Endothelial cell of umbilical vein (primary cell): ENCODE measurements at regions of chr5 and their contacts with region 1.

Region 1: GRCh38 chr5:123610665-123611405 is 98.9 kb downstream of the CSNK1G3 start:
- DNase-seq: peak; percentile 84
- H3K4me3 ChIP-seq: no peak overlapping the region
- H3K27ac ChIP-seq: no peak overlapping the region
- H3K4me1 ChIP-seq: no peaks in the 10 kb centered on the region
- H3K27me3 ChIP-seq: no peaks in the 10 kb centered on the region
- CTCF ChIP-seq: peak; percentile 68 to 72
- POLR2A ChIP-seq: no peak

Region 2: GRCh38 chr5:123344816-123345426 is 265.9 kb before region 1 on chr5:
- CTCF ChIA-PET with region 1: interaction called, 11 read pairs
- POLR2A ChIA-PET with region 1: no interaction called
- dilution Hi-C with region 1: no loop called
- intact Hi-C with region 1: no loop called
- DNase-seq: peak; percentile 45
- H3K4me3 ChIP-seq: no peak overlapping the region
- H3K27ac ChIP-seq: no peak overlapping the region
- H3K4me1 ChIP-seq: no peaks in the 10 kb centered on the region
- H3K27me3 ChIP-seq: no peaks in the 10 kb centered on the region
- CTCF ChIP-seq: peak; percentile 34 to 55
- POLR2A ChIP-seq: no peak

Region 3: DNA sequence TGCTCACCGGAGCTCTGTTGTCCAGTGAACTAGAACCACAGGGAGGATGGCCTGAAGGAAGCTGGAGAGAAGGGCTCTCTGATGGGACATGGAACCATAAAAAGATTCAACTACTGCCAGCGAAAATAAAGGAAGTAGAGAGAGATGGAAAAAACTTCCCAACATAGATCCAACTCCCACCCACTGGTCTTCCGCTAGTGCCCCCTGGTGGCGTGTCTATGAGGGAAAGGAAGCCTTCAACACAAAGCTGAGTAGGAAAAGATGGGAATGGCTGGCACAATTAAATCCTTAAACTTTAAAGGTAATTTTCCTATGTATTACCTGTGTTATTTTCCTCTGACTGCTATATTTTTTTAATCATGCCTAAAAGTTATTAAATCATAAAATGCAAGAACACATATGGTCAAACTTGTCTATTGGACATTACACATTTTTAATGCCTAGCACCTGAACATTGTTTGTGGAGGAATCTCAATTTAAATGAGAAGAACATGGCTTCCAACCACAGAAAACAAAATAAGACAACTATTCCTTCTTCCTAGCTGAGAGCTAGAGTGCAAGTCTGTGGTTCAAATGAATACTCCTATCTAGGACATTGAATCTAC is 239.2 kb before region 1 on chr5:
- CTCF ChIA-PET with region 1: interaction called, 19 read pairs
- POLR2A ChIA-PET with region 1: no interaction called
- dilution Hi-C with region 1: no loop called
- intact Hi-C with region 1: loop called (anchors 5 kb)
- DNase-seq: no peak
- H3K4me3 ChIP-seq: no peak overlapping the region
- H3K27ac ChIP-seq: no peak overlapping the region
- H3K4me1 ChIP-seq: no peaks in the 10 kb centered on the region
- H3K27me3 ChIP-seq: no peaks in the 10 kb centered on the region
- CTCF ChIP-seq: peak; percentile 40 to 49
- POLR2A ChIP-seq: no peak

Region 4: GRCh38 chr5:123387313-123387712 is 223.5 kb before region 1 on chr5:
- CTCF ChIA-PET with region 1: interaction called, 11 read pairs
- POLR2A ChIA-PET with region 1: no interaction called
- dilution Hi-C with region 1: no loop called
- intact Hi-C with region 1: no loop called
- DNase-seq: peak; percentile 24
- H3K4me3 ChIP-seq: no peak overlapping the region
- H3K27ac ChIP-seq: no peak overlapping the region
- H3K4me1 ChIP-seq: no peaks in the 10 kb centered on the region
- H3K27me3 ChIP-seq: no peaks in the 10 kb centered on the region
- CTCF ChIP-seq: no peak
- POLR2A ChIP-seq: no peak

Region 5: DNA sequence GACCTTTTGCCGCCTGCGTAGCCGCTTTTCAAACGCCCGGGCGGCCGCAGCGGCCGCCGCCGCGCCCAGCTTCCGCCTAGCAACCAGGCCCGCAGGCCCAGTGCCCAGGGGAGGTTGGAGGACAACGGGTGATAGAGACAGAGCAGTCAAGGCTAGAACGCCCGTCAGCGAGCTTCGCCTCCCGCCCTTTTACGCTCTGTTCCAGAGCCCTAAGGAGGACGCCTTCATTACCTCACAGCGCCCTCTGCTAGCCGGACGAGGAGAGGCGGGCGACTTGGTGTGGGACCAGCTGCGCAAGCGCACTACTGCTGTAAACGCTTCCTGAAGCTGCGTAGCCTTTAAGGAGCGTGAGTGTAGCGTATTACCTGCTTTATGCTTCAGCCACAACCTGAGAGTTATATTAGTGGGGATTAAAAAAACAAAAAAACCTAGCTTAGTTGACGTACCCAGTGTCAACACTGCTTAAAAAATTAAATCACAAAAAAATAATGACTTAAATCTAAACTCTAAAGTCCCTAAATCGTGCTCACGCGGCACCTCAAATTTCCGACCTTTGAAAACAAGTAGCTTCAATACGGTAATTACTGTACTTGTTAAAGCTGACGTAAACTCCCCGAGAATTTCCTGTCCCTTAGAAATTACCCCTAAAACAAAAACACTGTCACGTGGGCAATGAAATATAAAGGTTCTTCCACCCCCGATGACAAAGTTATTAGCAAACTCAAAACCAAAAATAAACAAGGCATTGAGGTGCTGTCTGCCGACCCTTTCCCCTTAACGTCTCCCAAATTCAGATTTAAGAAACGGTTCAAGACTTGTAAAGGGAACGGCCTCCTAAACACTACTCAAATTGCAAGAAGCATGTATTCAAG is 187.3 kb before region 1 on chr5 and contains the start of gene CEP120:
- CTCF ChIA-PET with region 1: interaction called, 42 read pairs
- POLR2A ChIA-PET with region 1: no interaction called
- dilution Hi-C with region 1: no loop called
- intact Hi-C with region 1: loop called (anchors 1 kb)
- DNase-seq: peak; percentile 100
- H3K4me3 ChIP-seq: peak within 1 kb of the TSS; percentile 81 to 94 (median 93)
- H3K27ac ChIP-seq: peak within 1 kb of the TSS; percentile 62
- H3K4me1 ChIP-seq: peaks cover 11% of the 10 kb centered on the region
- H3K27me3 ChIP-seq: no peaks in the 10 kb centered on the region
- CTCF ChIP-seq: peak; percentile 88
- POLR2A ChIP-seq: peak; percentile 82
- total RNA-seq, gene CEP120: 15.0 and 18.8 TPM in 2 replicates

Region 6: DNA sequence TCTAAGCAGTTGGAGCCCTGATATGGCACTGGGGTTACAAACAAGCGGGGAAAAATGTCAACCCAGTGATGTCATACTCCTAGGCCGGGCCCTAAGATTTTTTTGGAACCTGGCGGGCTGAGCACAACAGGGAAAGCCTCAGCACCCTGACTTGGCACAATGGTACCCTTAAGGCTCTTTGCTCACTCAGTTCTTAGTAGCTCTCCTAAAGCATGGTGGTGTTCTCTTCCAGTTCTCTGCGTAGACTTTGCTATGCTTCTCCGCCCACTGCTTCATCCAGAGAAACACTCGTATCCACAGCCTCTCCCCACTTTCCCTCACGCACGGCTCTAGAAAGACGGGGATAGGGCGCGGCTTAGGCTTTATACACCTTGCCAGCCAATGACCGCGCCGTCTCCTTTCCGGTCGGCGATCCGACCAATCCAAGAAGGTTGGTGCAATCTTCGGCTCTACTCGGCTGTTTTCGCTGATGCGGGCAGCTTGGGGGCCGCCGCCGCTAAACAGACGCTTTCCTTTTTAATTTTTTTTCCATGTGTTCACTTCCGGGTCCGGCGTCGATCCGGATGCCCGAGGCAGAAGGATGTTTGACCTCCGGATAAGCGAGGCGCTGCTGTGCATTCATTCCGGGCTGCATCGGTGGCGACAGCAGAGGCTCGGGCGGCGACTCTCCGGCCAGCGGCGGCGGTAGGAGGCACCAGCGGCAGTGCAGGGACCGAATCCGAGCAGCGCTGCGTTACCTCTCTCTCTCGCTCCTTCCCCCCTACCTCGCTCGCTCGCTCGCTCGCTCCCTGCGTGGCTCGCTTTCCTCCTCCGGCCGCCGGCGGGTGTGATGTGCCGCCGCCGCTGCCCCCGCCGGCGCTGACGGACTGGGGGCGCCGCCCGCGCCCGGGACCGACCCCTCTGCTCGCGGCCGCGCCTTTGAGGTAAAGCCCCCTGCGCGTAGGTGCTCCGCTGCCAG is 98.9 kb before region 1 on chr5 and contains the start of gene CSNK1G3:
- CTCF ChIA-PET with region 1: no interaction called
- POLR2A ChIA-PET with region 1: no interaction called
- dilution Hi-C with region 1: no loop called
- intact Hi-C with region 1: loop called (anchors 1 kb)
- DNase-seq: peak; percentile 99
- H3K4me3 ChIP-seq: peak within 1 kb of the TSS; percentile 69 to 81 (median 74)
- H3K27ac ChIP-seq: peak within 1 kb of the TSS; percentile 62
- H3K4me1 ChIP-seq: peaks cover 10% of the 10 kb centered on the region
- H3K27me3 ChIP-seq: peaks cover 2 to 9% of the 10 kb centered on the region in 2 experiments
- CTCF ChIP-seq: no peak
- POLR2A ChIP-seq: peak; percentile 98
- total RNA-seq, gene CSNK1G3: 33.0 and 35.9 TPM in 2 replicates

Region 7: DNA sequence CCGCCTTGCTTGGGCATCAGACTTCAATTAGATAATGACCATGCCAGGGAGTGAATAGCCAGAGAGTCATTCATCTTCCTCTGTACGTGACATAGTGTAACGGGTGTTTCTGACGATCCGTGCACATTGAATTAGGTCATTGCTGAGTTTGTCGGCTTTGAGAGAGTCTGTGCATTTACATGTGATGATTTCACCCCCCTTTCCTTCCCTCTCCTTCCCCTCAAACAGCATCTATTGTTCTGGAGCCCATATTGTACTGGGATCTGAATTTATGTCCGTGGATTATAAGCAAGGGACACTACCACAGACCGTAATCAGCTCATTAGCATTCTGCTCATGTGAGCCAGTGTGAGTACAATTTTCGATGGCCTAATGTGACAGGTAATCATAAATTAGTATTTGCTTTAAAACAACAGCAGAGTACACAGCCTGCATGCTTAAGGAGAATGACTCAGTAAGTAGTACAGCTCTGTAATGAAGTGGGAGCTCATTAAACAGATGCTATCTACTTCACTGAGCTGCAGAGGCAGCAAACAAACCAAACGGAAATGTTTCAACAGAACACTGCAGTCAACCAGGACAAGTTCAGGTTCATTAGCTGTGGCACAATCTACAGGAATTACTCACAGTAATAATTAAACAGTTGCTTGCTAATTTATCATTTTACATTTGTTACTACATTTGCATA is 203.2 kb after region 1 on chr5:
- CTCF ChIA-PET with region 1: no interaction called
- POLR2A ChIA-PET with region 1: no interaction called
- dilution Hi-C with region 1: no loop called
- intact Hi-C with region 1: no loop called
- DNase-seq: peak; percentile 93
- H3K4me3 ChIP-seq: peak overlapping the region in 1 of 3 experiments; percentile 6
- H3K27ac ChIP-seq: peak overlapping the region; percentile 51
- H3K4me1 ChIP-seq: peaks cover 13% of the 10 kb centered on the region
- H3K27me3 ChIP-seq: no peaks in the 10 kb centered on the region
- CTCF ChIP-seq: no peak
- POLR2A ChIP-seq: no peak